Left ventricle myocardium inferior (tissue), 1 donor: ENCODE measurements at regions of chr6 and their contacts with region 1.

Region 1: DNA sequence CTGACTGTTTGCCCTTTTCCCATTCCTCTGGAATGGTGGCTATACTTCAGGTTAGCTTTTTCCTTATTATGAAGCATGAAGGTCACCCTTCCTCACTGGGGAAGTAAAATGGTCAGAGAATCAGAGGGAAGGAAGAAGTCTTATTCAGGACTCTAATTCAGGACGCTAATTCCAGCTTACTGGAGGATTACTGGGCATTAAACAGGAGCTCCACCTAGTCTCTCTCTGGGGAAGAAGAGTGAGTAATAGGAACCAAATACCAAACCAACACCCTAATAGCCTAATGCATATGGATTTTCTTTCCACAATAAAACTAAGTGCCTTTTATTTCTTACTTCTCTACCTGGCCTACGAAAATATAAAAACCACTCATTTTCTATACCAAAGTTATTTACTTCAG is 10.1 kb downstream of the CRISP1 start:
- DNase-seq: no peak
- H3K4me3 ChIP-seq: no peak overlapping the region
- H3K27ac ChIP-seq: no peak overlapping the region
- H3K4me1 ChIP-seq: no peaks in the 10 kb centered on the region
- H3K27me3 ChIP-seq: peaks cover 12% of the 10 kb centered on the region
- CTCF ChIP-seq: no peak

Region 2: GRCh38 chr6:49625140-49625539 is 231.1 kb before region 1 on chr6:
- intact Hi-C with region 1: loop called (anchors 10 kb)
- DNase-seq: no peak
- H3K4me3 ChIP-seq: no peak overlapping the region
- H3K27ac ChIP-seq: no peak overlapping the region
- H3K4me1 ChIP-seq: no peaks in the 10 kb centered on the region
- H3K27me3 ChIP-seq: no peaks in the 10 kb centered on the region
- CTCF ChIP-seq: no peak

Region 3: DNA sequence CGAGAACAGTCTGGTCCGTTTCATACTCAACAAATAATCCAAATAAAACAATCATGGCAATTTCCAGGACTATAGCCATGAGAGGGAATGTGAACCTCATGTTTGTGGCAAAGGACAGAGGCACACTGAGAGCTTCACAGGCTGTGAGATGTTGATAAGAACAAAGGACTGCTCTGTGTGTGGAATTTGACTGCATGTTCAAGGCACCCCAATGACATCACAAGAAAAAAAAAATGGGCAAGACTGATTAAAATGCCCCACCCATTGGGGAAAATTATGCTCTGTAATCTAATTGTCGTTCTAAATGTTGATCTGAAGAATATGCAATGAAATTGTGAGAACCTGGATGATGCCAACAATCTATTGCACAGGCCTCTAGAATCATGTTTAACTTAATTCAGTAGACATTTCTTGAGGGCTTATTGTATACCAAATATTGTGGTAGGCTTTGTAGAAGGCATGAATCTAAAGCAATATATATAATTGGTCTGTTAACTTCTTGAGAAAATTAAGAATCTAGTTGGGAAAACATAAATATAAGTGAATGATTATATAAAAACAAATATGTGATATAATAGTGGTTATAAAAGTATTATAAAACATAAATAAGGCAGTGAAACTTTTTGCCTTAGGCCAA is 219.5 kb before region 1 on chr6 and contains the start of gene RHAG:
- intact Hi-C with region 1: no loop called
- DNase-seq: no peak
- H3K4me3 ChIP-seq: no peak within 1 kb of the TSS
- H3K27ac ChIP-seq: no peak within 1 kb of the TSS
- H3K4me1 ChIP-seq: no peaks in the 10 kb centered on the region
- H3K27me3 ChIP-seq: peaks cover 7% of the 10 kb centered on the region
- CTCF ChIP-seq: no peak
- total RNA-seq, gene RHAG: 0.44 TPM